CD8-positive, alpha-beta T cell (primary cell): ENCODE measurements at regions of chr6 and their contacts with region 1.

Region 1: DNA sequence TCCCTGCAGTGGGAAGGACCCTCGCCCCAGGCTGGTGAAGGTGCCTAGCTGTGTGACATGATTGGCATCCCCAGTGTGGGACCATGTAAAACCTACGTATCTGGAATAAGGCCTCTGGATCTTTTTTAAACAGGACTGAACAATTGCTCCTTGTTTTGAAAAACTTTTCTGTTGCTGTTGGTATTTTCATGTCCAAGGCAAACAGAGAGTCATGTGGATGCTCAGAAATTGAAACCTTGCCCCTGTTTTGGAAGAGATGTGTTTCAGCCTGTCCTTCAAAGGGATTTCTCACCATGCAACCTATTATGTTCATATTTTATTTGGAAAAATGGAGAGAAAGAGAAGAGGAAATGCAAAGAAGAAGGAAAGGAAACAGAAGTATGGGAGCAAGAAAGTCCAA is 362.3 kb downstream of the PKHD1 start:
- DNase-seq: no peak
- ATAC-seq: no peak
- H3K4me3 ChIP-seq: no peak overlapping the region
- H3K4me3 Mint-ChIP-seq: no peak overlapping the region
- H3K27ac ChIP-seq: no peak overlapping the region
- H3K27ac Mint-ChIP-seq: no peak overlapping the region
- H3K4me1 ChIP-seq: no peaks in the 10 kb centered on the region
- H3K4me1 Mint-ChIP-seq: no peaks in the 10 kb centered on the region
- H3K27me3 ChIP-seq: no peaks in the 10 kb centered on the region
- H3K27me3 Mint-ChIP-seq: no peaks in the 10 kb centered on the region
- CTCF ChIP-seq: no peak

Region 2: DNA sequence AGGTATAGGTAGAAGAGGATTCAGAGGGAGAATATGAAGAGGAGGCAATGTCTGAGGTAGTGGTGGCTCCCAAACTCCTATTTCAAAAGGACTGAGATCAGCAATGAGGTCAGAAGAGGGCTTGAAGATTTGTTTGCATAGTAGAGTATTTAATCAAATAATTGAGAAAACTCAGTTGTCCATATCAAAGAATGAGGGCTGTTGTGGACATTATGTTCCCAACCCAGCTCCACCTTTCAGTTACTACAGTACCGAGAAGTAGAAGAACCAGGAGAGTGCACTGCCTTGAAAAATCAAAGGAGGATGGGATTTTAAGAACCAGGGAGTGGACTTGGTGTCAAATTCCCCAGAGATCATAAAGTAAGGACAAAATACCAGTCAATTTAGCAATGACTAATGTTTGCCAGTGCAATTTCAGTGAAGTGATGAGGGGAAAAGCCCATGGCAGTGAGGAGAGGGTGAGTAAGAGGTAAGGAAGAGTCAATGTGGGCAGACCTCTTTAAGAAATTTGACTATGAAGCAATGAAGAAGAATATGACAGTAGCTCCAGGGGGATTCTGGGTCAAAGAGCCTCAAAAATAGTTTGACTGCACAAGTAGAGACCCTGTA is 20.1 kb before region 1 on chr6:
- CTCF ChIA-PET with region 1: no interaction called
- POLR2A ChIA-PET with region 1: no interaction called
- intact Hi-C with region 1: loop called in 1 of 2 experiments (anchors 2 kb)
- DNase-seq: no peak
- ATAC-seq: no peak
- H3K4me3 ChIP-seq: no peak overlapping the region
- H3K4me3 Mint-ChIP-seq: no peak overlapping the region
- H3K27ac ChIP-seq: no peak overlapping the region
- H3K27ac Mint-ChIP-seq: no peak overlapping the region
- H3K4me1 ChIP-seq: no peaks in the 10 kb centered on the region
- H3K4me1 Mint-ChIP-seq: no peaks in the 10 kb centered on the region
- H3K27me3 ChIP-seq: no peaks in the 10 kb centered on the region
- H3K27me3 Mint-ChIP-seq: no peaks in the 10 kb centered on the region
- CTCF ChIP-seq: no peak

Region 3: GRCh38 chr6:52759085-52759484 is 1033.9 kb after region 1 on chr6:
- CTCF ChIA-PET with region 1: no interaction called
- POLR2A ChIA-PET with region 1: no interaction called
- intact Hi-C with region 1: no loop called
- DNase-seq: no peak
- ATAC-seq: no peak
- H3K4me3 ChIP-seq: no peak overlapping the region
- H3K4me3 Mint-ChIP-seq: no peak overlapping the region
- H3K27ac ChIP-seq: no peak overlapping the region
- H3K27ac Mint-ChIP-seq: no peak overlapping the region
- H3K4me1 ChIP-seq: no peaks in the 10 kb centered on the region
- H3K4me1 Mint-ChIP-seq: no peaks in the 10 kb centered on the region
- H3K27me3 ChIP-seq: no peaks in the 10 kb centered on the region
- H3K27me3 Mint-ChIP-seq: peaks cover 26% of the 10 kb centered on the region
- CTCF ChIP-seq: no peak